Naive thymus-derived CD8-positive, alpha-beta T cell (primary cell): ENCODE measurements at regions of chr15 and their contacts with region 1.

Region 1: DNA sequence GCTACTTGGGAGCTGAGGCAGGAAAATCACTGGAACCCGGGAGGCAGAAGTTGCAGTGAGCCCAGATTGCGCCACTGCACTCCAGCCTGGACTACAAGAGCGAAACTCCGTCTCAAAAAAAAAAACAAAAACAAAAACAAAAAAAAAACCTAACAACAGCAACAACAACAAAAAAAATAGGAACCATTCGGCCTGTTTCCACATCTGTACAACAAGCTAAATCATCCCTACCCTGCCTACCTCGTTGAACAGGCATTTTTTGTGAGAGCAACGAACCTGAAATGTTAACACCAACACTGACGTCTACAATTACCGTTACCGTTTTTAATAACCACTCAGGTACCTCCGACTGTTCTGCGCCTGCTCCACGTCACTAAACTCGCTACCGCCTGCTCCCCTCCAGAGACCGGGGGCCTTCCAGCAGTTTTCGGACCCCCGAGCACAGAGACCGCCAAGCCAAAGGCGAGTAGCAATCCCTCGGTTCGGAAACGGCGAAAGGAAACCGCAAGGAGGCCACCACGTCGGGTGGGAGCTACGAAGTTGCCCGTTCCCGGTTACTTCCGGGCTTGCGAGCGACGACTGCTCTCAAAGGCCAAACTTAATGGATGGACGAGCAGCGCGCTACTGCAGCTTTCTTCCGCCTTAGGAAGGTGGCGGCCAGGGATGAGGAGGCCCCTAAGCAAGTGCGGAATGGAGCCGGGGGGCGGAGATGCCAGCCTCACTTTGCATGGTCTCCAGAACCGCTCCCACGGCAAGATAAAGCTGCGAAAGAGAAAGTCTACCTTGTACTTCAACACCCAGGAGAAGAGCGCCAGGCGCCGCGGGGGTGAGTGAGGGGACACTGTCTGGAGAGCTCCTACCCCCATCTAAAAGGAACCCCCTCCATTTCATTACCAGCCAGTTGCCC is at the starts of genes PIGB and PIGBOS1:
- DNase-seq: peak; percentile 51 to 91 (median 80)
- ATAC-seq: peak; percentile 89 to 92
- H3K4me3 Mint-ChIP-seq: peak within 1 kb of the TSS; percentile 96 to 99 (median 98)
- H3K27ac Mint-ChIP-seq: peak within 1 kb of the TSS; percentile 99 to 100 (median 100)
- H3K4me1 Mint-ChIP-seq: peaks cover 31 to 80% (median 68%) of the 10 kb centered on the region in 4 donors
- H3K27me3 Mint-ChIP-seq: no peaks in the 10 kb centered on the region
- polyA plus RNA-seq, gene PIGB: 10.8 to 15.3 (median 13.5) TPM
- polyA plus RNA-seq, gene PIGBOS1: 28.4 to 37.5 (median 34.0) TPM

Region 2: GRCh38 chr15:55196458-55197361 is 122.1 kb before region 1 on chr15 and contains the start of gene RSL24D1:
- POLR2A ChIA-PET with region 1: interaction called, 49 read pairs
- DNase-seq: peak; percentile 88 to 99 (median 96)
- ATAC-seq: peak; percentile 95 to 97
- H3K4me3 Mint-ChIP-seq: no peak within 1 kb of the TSS
- H3K27ac Mint-ChIP-seq: no peak within 1 kb of the TSS
- H3K4me1 Mint-ChIP-seq: peaks cover 9 to 19% (median 13%) of the 10 kb centered on the region in 4 donors
- H3K27me3 Mint-ChIP-seq: no peaks in the 10 kb centered on the region
- polyA plus RNA-seq, gene RSL24D1: 78.8 to 116 (median 93.2) TPM

Region 3: DNA sequence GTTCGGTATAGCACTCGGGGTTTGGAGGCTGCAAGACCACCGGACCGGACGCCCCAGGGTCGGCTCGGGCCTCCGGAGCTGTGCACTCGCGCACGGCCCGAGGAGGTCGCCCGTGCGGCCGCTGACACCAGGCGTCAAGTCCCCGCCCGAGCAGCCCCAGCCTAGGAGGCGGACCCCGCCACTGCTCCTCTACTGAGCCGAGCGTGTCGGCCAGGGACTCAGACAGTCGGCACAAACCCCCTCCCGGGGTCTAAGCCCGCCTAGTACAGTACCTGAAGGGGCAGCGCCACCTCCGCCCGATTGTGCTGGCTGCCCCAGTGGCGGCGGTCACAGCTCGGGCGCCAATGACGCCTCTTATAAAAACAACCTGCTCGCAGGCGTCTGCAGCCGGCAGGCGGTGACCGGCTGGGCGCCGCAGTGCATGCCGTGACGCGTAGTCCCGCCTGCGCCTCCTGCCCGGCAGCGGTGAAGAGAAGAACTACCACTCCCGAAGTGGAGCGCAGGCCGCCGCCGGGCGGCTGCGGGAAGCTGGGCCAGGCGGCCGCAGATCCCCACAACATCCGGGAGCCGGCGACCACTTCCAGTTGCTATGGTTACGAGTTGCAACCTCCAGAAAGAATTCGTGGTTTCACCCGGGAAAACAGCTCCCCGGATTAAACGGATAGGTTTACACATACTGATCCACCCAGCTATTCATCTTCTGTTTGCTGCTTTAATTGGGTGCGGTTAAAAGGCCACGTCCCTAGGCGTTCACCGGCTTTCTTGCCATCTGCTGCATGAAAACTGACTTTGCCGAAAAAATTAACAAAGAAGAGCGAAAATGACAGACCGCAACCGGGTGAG is 89.3 kb after region 1 on chr15 and contains the starts of genes CCPG1 and PIERCE2:
- POLR2A ChIA-PET with region 1: interaction called, 24 read pairs
- DNase-seq: peak; percentile 76 to 91 (median 86)
- ATAC-seq: peak; percentile 90 to 92
- H3K4me3 Mint-ChIP-seq: peak within 1 kb of the TSS; percentile 85 to 97 (median 94)
- H3K27ac Mint-ChIP-seq: peak within 1 kb of the TSS; percentile 83 to 95 (median 94)
- H3K4me1 Mint-ChIP-seq: peaks cover 9 to 37% (median 33%) of the 10 kb centered on the region in 4 donors
- H3K27me3 Mint-ChIP-seq: no peaks in the 10 kb centered on the region
- polyA plus RNA-seq, gene CCPG1: 13.1 to 30.4 (median 29.2) TPM
- polyA plus RNA-seq, gene PIERCE2: 0.44 to 0.50 TPM in 2 of 3 donors, not detected in the other